Naive thymus-derived CD4-positive, alpha-beta T cell (primary cell): ENCODE measurements at regions of chr12 and their contacts with region 1.

Region 1: GRCh38 chr12:108950991-108951739 is 69.7 kb downstream of the SVOP start:
- DNase-seq: peak; percentile 49 to 70 (median 63)
- ATAC-seq: peak; percentile 94
- H3K4me3 ChIP-seq: no peak overlapping the region
- H3K4me3 Mint-ChIP-seq: no peak overlapping the region
- H3K27ac ChIP-seq: no peak overlapping the region
- H3K27ac Mint-ChIP-seq: peak overlapping the region in 1 of 9 donors; percentile 4
- H3K4me1 ChIP-seq: no peaks in the 10 kb centered on the region
- H3K4me1 Mint-ChIP-seq: peaks cover 0 to 6% (median 4%) of the 10 kb centered on the region in 7 donors
- H3K27me3 ChIP-seq: no peaks in the 10 kb centered on the region
- H3K27me3 Mint-ChIP-seq: peaks cover 7 to 24% (median 17%) of the 10 kb centered on the region in 5 donors

Region 2: GRCh38 chr12:108803428-108804105 is 147.6 kb before region 1 on chr12:
- CTCF ChIA-PET with region 1: no interaction called
- POLR2A ChIA-PET with region 1: no interaction called
- intact Hi-C with region 1: loop called in 1 of 2 experiments (anchors 1 kb)
- DNase-seq: peak; percentile 25 to 78 (median 70)
- ATAC-seq: peak; percentile 93
- H3K4me3 ChIP-seq: no peak overlapping the region
- H3K4me3 Mint-ChIP-seq: no peak overlapping the region
- H3K27ac ChIP-seq: no peak overlapping the region
- H3K27ac Mint-ChIP-seq: peak overlapping the region in 3 of 9 donors; percentile 37 to 62 (median 48)
- H3K4me1 ChIP-seq: peaks cover 0 to 3% of the 10 kb centered on the region in 2 donors
- H3K4me1 Mint-ChIP-seq: peaks cover 0 to 10% (median 3%) of the 10 kb centered on the region in 7 donors
- H3K27me3 ChIP-seq: no peaks in the 10 kb centered on the region
- H3K27me3 Mint-ChIP-seq: no peaks in the 10 kb centered on the region

Region 3: DNA sequence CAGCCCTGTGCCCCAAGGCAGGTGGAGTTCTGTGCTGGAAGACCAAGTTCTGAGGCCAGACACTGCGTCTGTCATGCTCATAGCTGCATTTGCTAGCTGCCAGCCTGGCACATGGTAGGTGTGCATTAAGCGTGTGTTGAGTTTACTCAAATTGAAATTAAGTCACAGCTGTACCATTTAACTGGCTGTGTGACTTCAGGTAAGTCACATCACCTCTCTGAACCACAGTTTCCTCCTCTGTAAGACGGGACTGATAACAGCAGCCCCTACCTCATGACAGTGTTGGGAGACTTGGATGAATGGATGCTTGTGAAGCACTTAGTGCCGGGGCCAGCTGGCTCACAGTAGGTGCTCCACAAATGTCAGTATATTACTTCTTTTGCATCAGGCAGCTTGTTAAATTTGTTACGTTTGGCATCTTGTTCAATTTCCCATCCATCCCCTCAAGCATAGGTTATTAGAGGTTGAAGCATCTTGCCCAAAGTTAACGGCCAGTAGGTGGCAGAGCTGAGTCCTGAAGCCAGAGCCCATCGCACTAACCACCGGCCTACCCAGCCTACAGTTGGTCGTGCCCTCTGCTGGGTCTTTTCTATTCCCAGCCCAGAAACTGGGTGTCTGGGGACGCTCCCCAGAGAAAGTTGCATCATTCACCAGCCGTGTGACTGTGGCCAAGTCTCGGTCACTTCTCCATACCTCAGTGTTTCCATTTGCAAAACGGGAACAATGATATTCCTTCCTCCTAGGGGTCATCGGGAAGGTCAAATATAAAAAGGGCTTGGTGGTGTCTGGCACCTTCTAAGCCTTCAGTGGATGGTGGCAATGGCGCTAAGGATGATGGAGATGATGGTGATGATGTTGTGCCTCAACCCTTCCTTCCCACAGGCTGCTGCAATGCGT is 66.8 kb before region 1 on chr12:
- CTCF ChIA-PET with region 1: no interaction called
- POLR2A ChIA-PET with region 1: no interaction called
- intact Hi-C with region 1: loop called (anchors 1 kb)
- DNase-seq: peak; percentile 15 to 55 (median 33)
- ATAC-seq: peak; percentile 93
- H3K4me3 ChIP-seq: no peak overlapping the region
- H3K4me3 Mint-ChIP-seq: no peak overlapping the region
- H3K27ac ChIP-seq: no peak overlapping the region
- H3K27ac Mint-ChIP-seq: no peak overlapping the region
- H3K4me1 ChIP-seq: no peaks in the 10 kb centered on the region
- H3K4me1 Mint-ChIP-seq: peaks cover 0 to 6% (median 0%) of the 10 kb centered on the region in 7 donors
- H3K27me3 ChIP-seq: no peaks in the 10 kb centered on the region
- H3K27me3 Mint-ChIP-seq: no peaks in the 10 kb centered on the region

Region 4: DNA sequence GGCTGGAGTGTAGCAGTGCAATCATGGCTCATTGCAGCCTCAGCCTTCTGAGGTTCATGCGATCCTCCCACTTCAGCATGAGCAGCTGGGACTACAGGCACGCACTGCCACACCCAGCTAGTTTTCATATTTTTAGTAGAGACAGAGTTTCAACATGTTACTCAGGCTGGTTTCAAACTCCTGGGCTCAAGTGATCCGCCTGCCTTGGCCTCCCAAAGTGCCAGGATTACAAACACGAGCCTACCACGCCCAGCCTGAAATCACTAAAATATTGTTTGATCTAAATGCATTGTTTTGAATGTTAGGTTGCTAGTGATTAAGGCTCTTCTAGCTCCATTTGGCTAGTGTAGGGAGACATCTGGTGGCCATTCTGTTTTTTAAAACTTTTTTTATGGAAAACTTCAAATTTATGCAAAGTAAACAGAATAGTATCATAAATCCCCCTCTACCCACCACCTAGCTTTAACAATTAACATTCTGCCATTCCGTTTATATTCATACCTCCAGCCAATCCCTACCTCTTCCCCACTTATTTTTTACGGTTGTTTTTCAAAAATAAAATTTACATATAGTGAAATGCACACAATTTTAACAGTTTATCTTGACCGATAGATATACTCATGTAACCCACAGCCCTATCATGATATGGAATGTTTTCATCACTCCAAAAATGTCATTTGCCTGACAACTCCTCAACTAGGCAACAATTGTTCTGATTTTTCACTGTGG is 434.3 kb after region 1 on chr12:
- CTCF ChIA-PET with region 1: no interaction called
- POLR2A ChIA-PET with region 1: no interaction called
- intact Hi-C with region 1: loop called in 1 of 2 experiments (anchors 1 kb)
- DNase-seq: peak in 5 of 9 donors; percentile 2 to 28 (median 22)
- ATAC-seq: peak; percentile 32
- H3K4me3 ChIP-seq: no peak overlapping the region
- H3K4me3 Mint-ChIP-seq: no peak overlapping the region
- H3K27ac ChIP-seq: no peak overlapping the region
- H3K27ac Mint-ChIP-seq: no peak overlapping the region
- H3K4me1 ChIP-seq: no peaks in the 10 kb centered on the region
- H3K4me1 Mint-ChIP-seq: no peaks in the 10 kb centered on the region
- H3K27me3 ChIP-seq: no peaks in the 10 kb centered on the region
- H3K27me3 Mint-ChIP-seq: peaks cover 27 to 45% (median 40%) of the 10 kb centered on the region in 5 donors